Activated naive CD4-positive, alpha-beta T cell treated with anti-CD3 and anti-CD28 coated beads for 36 hours (primary cell): ENCODE measurements at regions of chr1 and their contacts with region 1.

Region 1: DNA sequence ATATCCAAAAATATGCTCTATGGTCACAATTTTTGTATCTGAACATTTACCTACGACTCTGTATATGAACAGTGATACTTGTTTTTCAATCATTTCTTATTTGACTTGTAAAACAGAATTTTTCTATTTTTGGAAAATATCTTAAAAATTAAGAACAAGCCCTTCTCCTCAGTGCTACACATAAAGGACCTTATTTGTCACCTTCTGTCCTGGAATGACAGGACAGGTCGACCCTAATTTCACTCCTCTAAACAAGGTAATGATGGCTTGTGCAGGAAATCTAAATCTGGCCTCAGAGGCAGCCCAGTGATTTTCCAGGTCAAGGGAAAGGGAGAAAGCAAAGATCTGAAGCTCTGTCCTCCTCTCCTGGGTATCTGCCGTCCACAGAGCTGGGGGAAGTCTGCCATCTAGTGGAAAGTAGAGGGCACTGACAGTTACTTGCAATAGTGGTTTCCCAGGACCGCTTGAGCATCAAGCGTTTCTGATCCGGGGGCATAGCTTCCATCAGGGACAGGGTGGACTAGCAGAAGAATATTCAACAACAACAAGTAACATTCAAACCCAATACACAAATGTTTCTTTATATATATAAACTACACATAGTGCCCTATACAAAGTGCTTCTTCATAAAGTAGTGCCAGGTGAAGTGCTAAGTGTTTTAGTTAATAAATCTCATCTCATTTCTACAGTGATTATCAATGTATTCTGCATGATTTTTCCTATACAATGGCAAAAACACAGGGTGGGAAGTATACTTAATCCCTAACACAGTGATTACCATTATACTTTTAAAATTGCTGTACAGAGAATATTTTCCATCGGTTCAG is 74.6 kb downstream of the SLC25A24 start:
- DNase-seq: peak; percentile 80
- H3K4me3 Mint-ChIP-seq: no peak overlapping the region
- H3K27ac Mint-ChIP-seq: no peak overlapping the region
- H3K4me1 Mint-ChIP-seq: peaks cover 3% of the 10 kb centered on the region
- H3K27me3 Mint-ChIP-seq: no peaks in the 10 kb centered on the region

Region 2: GRCh38 chr1:107430540-107431228 is 694.8 kb before region 1 on chr1:
- CTCF ChIA-PET with region 1: interaction called, 3 read pairs
- intact Hi-C with region 1: loop called (anchors 1 kb)
- DNase-seq: peak; percentile 28
- H3K4me3 Mint-ChIP-seq: no peak overlapping the region
- H3K27ac Mint-ChIP-seq: no peak overlapping the region
- H3K4me1 Mint-ChIP-seq: no peaks in the 10 kb centered on the region
- H3K27me3 Mint-ChIP-seq: peaks cover 7% of the 10 kb centered on the region

Region 3: GRCh38 chr1:107897438-107898345 is 227.8 kb before region 1 on chr1:
- CTCF ChIA-PET with region 1: interaction called, 5 read pairs
- intact Hi-C with region 1: loop called (anchors 1 kb)
- DNase-seq: no peak
- H3K4me3 Mint-ChIP-seq: peak overlapping the region; percentile 25
- H3K27ac Mint-ChIP-seq: peak overlapping the region; percentile 78
- H3K4me1 Mint-ChIP-seq: peaks cover 40% of the 10 kb centered on the region
- H3K27me3 Mint-ChIP-seq: no peaks in the 10 kb centered on the region

Region 4: GRCh38 chr1:107933736-107934135 is 191.8 kb before region 1 on chr1:
- CTCF ChIA-PET with region 1: no interaction called
- intact Hi-C with region 1: no loop called
- DNase-seq: no peak
- H3K4me3 Mint-ChIP-seq: no peak overlapping the region
- H3K27ac Mint-ChIP-seq: no peak overlapping the region
- H3K4me1 Mint-ChIP-seq: peaks cover 49% of the 10 kb centered on the region
- H3K27me3 Mint-ChIP-seq: no peaks in the 10 kb centered on the region